ENCODE measurements at regions of chr13 and their contacts with region 1.

Region 1: DNA sequence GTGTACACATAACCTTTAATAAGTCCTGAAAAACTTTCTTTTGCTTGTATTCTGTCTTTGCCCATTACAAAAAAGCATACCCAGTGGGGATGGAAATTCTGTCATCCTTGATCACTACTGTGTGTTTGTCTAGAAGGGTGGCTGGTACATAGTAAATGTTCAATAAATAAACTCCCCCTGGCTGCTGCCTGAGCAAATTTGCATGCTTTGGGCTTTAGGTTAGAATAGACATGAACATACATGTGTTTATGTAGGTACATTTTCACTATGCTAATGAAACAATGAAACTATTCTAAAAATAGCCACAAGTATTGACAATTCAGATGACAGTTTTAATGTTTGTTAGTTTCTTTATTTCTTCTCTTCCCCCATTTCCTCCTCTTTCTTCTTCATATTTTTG is 36.1 kb downstream of the TNFSF13B start:
- DNase-seq: no peak
- ATAC-seq: no peak
- H3K4me3 ChIP-seq: no peak overlapping the region
- H3K4me3 Mint-ChIP-seq: peak overlapping the region in 1 of 10 donors; percentile 61
- H3K27ac ChIP-seq: no peak overlapping the region
- H3K27ac Mint-ChIP-seq: peak overlapping the region in 2 of 9 donors; percentile 37 to 39
- H3K4me1 ChIP-seq: peaks cover 0 to 8% of the 10 kb centered on the region in 2 donors
- H3K4me1 Mint-ChIP-seq: peaks cover 0 to 25% (median 14%) of the 10 kb centered on the region in 7 donors
- H3K27me3 ChIP-seq: no peaks in the 10 kb centered on the region
- H3K27me3 Mint-ChIP-seq: no peaks in the 10 kb centered on the region

Region 2: GRCh38 chr13:107534548-107534947 is 771.1 kb before region 1 on chr13:
- CTCF ChIA-PET with region 1: no interaction called
- POLR2A ChIA-PET with region 1: no interaction called
- intact Hi-C with region 1: no loop called
- DNase-seq: no peak
- ATAC-seq: no peak
- H3K4me3 ChIP-seq: no peak overlapping the region
- H3K4me3 Mint-ChIP-seq: no peak overlapping the region
- H3K27ac ChIP-seq: no peak overlapping the region
- H3K27ac Mint-ChIP-seq: no peak overlapping the region
- H3K4me1 ChIP-seq: no peaks in the 10 kb centered on the region
- H3K4me1 Mint-ChIP-seq: no peaks in the 10 kb centered on the region
- H3K27me3 ChIP-seq: no peaks in the 10 kb centered on the region
- H3K27me3 Mint-ChIP-seq: peaks cover 0 to 4% (median 0%) of the 10 kb centered on the region in 5 donors

Region 3: GRCh38 chr13:108289819-108290218 is 15.8 kb before region 1 on chr13:
- CTCF ChIA-PET with region 1: no interaction called
- POLR2A ChIA-PET with region 1: no interaction called
- intact Hi-C with region 1: loop called in 1 of 2 experiments (anchors 2 kb)
- DNase-seq: no peak
- ATAC-seq: no peak
- H3K4me3 ChIP-seq: no peak overlapping the region
- H3K4me3 Mint-ChIP-seq: no peak overlapping the region
- H3K27ac ChIP-seq: no peak overlapping the region
- H3K27ac Mint-ChIP-seq: peak overlapping the region in 2 of 9 donors; percentile 2 to 39
- H3K4me1 ChIP-seq: no peaks in the 10 kb centered on the region
- H3K4me1 Mint-ChIP-seq: peaks cover 0 to 12% (median 0%) of the 10 kb centered on the region in 7 donors
- H3K27me3 ChIP-seq: no peaks in the 10 kb centered on the region
- H3K27me3 Mint-ChIP-seq: no peaks in the 10 kb centered on the region

Region 4: DNA sequence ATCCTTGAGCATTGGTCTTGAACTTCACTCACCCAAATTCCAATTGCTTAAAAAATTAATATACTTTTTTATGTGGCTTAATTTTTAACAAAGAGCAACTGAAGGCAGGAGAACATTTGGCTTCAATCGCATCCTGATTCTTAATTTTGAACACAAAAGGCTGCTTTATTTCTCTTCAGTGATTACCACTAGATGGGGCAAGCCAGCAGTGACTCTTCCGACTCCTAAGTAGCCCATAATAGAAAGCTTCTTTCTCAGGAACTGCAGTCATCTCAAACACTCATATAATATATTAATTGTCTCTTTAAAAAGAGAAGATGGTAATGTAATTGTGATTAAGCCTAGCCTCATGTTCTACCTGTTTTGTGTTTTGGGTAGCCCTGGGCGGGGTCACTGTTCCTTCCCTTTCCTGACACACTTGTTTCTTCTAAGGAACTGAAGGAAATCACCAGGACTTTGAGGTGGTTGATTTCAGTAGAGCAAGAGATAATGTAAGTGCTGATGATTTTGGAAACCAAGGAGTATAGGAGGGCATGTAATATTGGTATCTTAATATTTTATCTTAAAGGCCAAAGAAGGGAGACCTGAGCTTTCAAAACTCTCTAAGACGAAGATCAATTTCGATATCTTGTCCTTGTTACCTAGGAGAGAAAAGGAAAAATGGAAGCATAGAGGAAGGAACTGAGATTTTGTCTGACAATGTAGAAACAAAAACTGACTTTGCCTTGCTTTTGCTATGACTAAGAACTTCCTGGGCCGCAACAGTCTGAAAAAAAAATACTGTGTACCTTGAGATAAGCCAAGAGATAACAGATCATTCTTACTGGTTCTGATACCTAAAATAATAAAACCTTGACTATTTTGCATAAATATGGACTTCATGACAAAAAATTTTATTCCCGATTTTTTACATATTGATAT is 37.0 kb after region 1 on chr13:
- CTCF ChIA-PET with region 1: no interaction called
- POLR2A ChIA-PET with region 1: no interaction called
- intact Hi-C with region 1: no loop called
- DNase-seq: peak in 6 of 9 donors; percentile 10 to 48 (median 35)
- ATAC-seq: peak; percentile 69
- H3K4me3 ChIP-seq: peak overlapping the region; percentile 15
- H3K4me3 Mint-ChIP-seq: peak overlapping the region in 7 of 10 donors; percentile 1 to 85 (median 60)
- H3K27ac ChIP-seq: peak overlapping the region; percentile 44
- H3K27ac Mint-ChIP-seq: peak overlapping the region in 7 of 9 donors; percentile 0 to 89 (median 77)
- H3K4me1 ChIP-seq: peaks cover 4 to 20% of the 10 kb centered on the region in 2 donors
- H3K4me1 Mint-ChIP-seq: peaks cover 4 to 57% (median 16%) of the 10 kb centered on the region in 7 donors
- H3K27me3 ChIP-seq: no peaks in the 10 kb centered on the region
- H3K27me3 Mint-ChIP-seq: peaks cover 0 to 16% (median 0%) of the 10 kb centered on the region in 5 donors

Measured in naive thymus-derived CD4-positive, alpha-beta T cell (primary cell).